ENCODE measurements at regions of chr5 and their contacts with region 1.

Region 1: DNA sequence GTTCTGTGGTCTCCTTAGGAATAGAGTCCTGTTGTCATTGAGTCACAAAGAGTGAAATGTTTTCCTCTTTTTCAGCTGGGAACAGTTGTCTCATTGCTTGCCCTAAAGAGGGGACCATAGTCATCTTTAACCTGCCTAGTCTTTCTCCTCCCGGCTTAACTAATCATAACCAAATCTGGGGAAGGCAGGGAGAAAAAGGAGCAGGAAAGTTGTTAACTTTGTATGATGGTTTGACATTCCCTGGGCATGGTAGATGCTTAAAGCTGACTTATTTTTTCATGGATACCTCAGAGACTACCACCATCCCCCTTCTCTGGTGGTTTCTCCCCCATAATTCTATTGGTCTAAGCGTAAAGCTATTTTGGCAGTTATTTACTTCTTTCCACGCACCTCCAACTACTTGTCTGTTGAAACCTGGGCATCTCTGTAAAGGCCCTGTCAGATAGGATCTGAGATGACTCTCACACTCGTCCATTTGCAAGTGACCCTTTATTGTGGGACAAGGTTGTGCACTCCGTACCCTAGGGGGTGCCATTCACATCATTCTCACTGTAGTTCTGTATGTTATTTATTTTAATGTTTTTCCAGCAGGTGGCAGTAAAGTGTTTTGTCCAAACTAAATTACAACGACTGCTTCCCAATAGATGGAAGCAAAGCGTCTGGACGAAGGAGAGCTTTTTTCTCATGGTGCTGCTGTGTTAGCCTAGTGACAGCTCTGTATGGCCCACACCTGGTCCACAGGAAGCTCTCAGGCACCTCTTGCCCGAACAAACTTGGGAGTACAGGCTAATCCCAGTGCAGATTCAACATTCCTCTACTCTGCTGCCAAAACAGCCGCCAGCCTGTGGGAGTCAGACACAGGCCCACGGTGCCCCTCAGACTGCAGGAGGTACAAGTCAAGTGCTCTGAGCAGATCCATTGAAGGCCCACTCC is 3.0 kb upstream of the FAM13B start:
- DNase-seq: peak; percentile 11 to 80 (median 72)
- ATAC-seq: peak; percentile 76
- H3K4me3 ChIP-seq: no peak overlapping the region
- H3K4me3 Mint-ChIP-seq: peak overlapping the region in 9 of 10 donors; percentile 0 to 78 (median 25)
- H3K27ac ChIP-seq: no peak overlapping the region
- H3K27ac Mint-ChIP-seq: peak overlapping the region in 8 of 9 donors; percentile 4 to 89 (median 37)
- H3K4me1 ChIP-seq: peaks cover 4 to 24% of the 10 kb centered on the region in 2 donors
- H3K4me1 Mint-ChIP-seq: peaks cover 15 to 30% (median 24%) of the 10 kb centered on the region in 7 donors
- H3K27me3 ChIP-seq: no peaks in the 10 kb centered on the region
- H3K27me3 Mint-ChIP-seq: no peaks in the 10 kb centered on the region

Region 2: DNA sequence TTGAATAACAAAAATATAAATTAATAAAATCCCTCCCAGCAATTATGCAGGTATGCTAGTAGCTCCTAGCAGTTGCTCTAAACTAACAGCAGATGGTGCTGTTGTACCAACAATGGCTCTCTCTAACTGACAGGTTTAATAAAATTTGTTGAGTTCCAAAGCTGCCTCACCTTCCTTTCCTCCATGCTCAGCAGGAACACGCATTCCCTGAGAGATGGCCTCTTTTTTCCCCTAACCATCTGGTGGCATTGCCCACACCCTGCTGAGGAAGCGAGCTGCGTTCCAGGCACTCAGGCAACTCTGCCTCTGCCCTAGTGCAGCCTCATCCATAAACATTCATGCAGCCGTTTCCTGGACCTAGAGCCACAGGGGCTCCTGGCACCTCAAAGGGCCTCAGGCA is 406.2 kb before region 1 on chr5:
- CTCF ChIA-PET with region 1: no interaction called
- POLR2A ChIA-PET with region 1: interaction called, 3 read pairs
- intact Hi-C with region 1: loop called in 1 of 2 experiments (anchors 1 kb)
- DNase-seq: peak in 7 of 9 donors; percentile 26 to 61 (median 52)
- ATAC-seq: peak; percentile 82
- H3K4me3 ChIP-seq: no peak overlapping the region
- H3K4me3 Mint-ChIP-seq: no peak overlapping the region
- H3K27ac ChIP-seq: no peak overlapping the region
- H3K27ac Mint-ChIP-seq: no peak overlapping the region
- H3K4me1 ChIP-seq: no peaks in the 10 kb centered on the region
- H3K4me1 Mint-ChIP-seq: peaks cover 0 to 2% (median 0%) of the 10 kb centered on the region in 7 donors
- H3K27me3 ChIP-seq: no peaks in the 10 kb centered on the region
- H3K27me3 Mint-ChIP-seq: no peaks in the 10 kb centered on the region

Region 3: DNA sequence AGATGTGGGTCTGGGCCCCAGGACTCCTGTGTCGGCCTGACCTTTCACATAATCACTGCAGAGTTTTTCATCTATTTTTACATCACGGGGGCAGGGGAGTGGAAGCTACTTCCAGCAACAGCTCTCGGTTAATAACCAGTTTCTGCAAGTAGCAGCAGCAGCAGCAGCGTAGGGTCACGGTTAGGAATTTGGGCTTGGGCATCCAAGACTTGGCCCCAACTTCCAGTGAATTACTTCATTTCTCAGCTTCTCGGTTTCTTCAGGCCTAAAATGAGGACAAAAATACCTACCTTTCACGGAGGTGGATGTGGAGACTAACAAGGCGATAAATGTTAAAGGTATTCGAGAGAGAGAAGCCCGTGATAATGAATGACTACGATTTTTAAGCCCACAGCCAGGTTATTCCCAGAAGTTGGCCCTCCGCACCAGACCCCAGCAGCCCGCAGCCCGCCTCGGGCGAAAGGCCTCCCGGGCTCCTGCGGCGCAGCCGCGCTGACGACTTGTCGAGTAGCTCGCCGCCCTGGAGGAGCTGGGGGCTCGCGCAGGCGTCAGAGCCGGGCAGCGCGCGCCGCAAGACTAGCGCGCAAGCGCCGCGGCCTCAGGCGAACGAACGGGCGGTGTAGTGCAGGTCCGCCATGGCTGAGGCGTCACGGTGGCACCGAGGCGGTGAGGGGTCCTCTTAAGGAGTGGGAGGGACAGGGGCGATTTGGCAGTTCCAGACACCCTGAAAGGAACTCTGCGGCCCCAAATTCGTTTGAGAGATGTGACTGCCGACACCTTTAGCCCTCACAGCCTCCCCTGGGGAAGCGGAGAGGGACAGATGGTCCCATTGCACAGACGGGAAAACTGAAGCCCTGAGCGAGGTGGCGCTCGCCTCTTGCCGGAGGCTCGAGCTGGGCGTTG is 146.8 kb before region 1 on chr5 and contains the start of gene PKD2L2:
- CTCF ChIA-PET with region 1: no interaction called
- POLR2A ChIA-PET with region 1: no interaction called
- intact Hi-C with region 1: loop called in 1 of 2 experiments (anchors 1 kb)
- DNase-seq: peak; percentile 62 to 82 (median 78)
- ATAC-seq: peak; percentile 99
- H3K4me3 ChIP-seq: peak within 1 kb of the TSS; percentile 73
- H3K4me3 Mint-ChIP-seq: peak within 1 kb of the TSS; percentile 85 to 95 (median 92)
- H3K27ac ChIP-seq: peak within 1 kb of the TSS; percentile 81
- H3K27ac Mint-ChIP-seq: peak within 1 kb of the TSS; percentile 87 to 96 (median 95)
- H3K4me1 ChIP-seq: peaks cover 4 to 12% of the 10 kb centered on the region in 2 donors
- H3K4me1 Mint-ChIP-seq: peaks cover 9 to 37% (median 25%) of the 10 kb centered on the region in 7 donors
- H3K27me3 ChIP-seq: no peaks in the 10 kb centered on the region
- H3K27me3 Mint-ChIP-seq: peaks cover 0 to 4% (median 0%) of the 10 kb centered on the region in 5 donors
- total RNA-seq, gene PKD2L2: 0.46 TPM in 2 of 5 experiments, not detected in the others

Region 4: DNA sequence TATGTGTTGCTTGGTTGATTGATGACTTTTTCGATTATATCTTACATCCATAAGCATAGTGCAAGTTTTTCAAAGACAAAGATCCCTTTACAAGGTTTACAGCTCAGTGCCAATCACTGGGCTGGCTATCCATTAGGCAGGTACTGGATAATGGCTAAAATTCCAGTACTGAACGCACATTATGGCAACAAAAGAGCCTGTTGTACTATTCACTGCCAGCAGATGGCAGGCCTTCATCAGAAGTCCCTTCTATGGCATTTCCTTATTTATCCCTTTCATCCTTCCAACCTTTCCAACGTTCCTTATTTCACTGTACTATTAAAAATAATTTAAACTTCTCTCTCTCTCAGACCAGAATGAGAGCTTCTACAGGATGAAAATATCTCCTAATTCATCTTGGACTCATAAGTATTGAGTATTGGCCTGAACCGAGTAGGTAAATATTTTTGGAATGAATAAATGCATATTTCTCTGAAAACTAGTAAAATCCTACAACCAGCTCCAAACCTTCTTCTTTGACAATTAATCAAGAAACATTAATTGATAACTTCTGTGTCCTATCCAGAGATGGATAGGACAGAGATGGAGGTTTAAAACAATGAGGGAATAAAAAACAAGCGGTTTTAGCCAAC is 41.3 kb after region 1 on chr5:
- CTCF ChIA-PET with region 1: interaction called, 6 read pairs
- POLR2A ChIA-PET with region 1: no interaction called
- intact Hi-C with region 1: loop called (anchors 2 kb)
- DNase-seq: peak in 8 of 9 donors; percentile 23 to 55 (median 39)
- ATAC-seq: peak; percentile 66
- H3K4me3 ChIP-seq: no peak overlapping the region
- H3K4me3 Mint-ChIP-seq: no peak overlapping the region
- H3K27ac ChIP-seq: no peak overlapping the region
- H3K27ac Mint-ChIP-seq: no peak overlapping the region
- H3K4me1 ChIP-seq: no peaks in the 10 kb centered on the region
- H3K4me1 Mint-ChIP-seq: peaks cover 0 to 17% (median 10%) of the 10 kb centered on the region in 7 donors
- H3K27me3 ChIP-seq: no peaks in the 10 kb centered on the region
- H3K27me3 Mint-ChIP-seq: peaks cover 0 to 4% (median 0%) of the 10 kb centered on the region in 5 donors

Region 5: GRCh38 chr5:138148811-138149210 is 112.9 kb after region 1 on chr5:
- CTCF ChIA-PET with region 1: no interaction called
- POLR2A ChIA-PET with region 1: no interaction called
- intact Hi-C with region 1: no loop called
- DNase-seq: no peak
- ATAC-seq: no peak
- H3K4me3 ChIP-seq: no peak overlapping the region
- H3K4me3 Mint-ChIP-seq: no peak overlapping the region
- H3K27ac ChIP-seq: no peak overlapping the region
- H3K27ac Mint-ChIP-seq: no peak overlapping the region
- H3K4me1 ChIP-seq: no peaks in the 10 kb centered on the region
- H3K4me1 Mint-ChIP-seq: no peaks in the 10 kb centered on the region
- H3K27me3 ChIP-seq: no peaks in the 10 kb centered on the region
- H3K27me3 Mint-ChIP-seq: peaks cover 0 to 9% (median 0%) of the 10 kb centered on the region in 5 donors

Region 6: DNA sequence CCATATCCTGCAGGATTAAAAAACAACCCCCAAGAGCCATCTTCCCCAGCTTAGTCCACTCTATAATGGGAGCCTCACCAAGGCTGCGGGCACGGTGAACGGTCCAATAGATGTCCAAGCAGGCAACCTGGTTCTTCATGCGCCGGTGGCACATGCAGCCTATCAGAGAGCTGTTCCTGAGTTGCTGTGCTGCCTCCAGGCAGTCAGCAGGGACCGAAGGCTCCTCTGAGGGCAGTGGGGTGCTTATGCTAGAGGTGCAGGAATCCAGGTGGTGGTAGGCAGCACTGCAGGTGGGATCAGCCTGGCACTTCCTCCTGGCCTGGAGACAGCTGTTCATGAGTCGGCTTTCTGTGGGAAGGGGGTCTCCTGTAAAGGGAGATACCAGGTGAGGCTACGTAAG is 228.3 kb after region 1 on chr5:
- CTCF ChIA-PET with region 1: no interaction called
- POLR2A ChIA-PET with region 1: no interaction called
- intact Hi-C with region 1: no loop called
- DNase-seq: no peak
- ATAC-seq: no peak
- H3K4me3 ChIP-seq: no peak overlapping the region
- H3K4me3 Mint-ChIP-seq: no peak overlapping the region
- H3K27ac ChIP-seq: no peak overlapping the region
- H3K27ac Mint-ChIP-seq: peak overlapping the region in 1 of 9 donors; percentile 7
- H3K4me1 ChIP-seq: no peaks in the 10 kb centered on the region
- H3K4me1 Mint-ChIP-seq: peaks cover 0 to 2% (median 0%) of the 10 kb centered on the region in 7 donors
- H3K27me3 ChIP-seq: no peaks in the 10 kb centered on the region
- H3K27me3 Mint-ChIP-seq: peaks cover 0 to 22% (median 10%) of the 10 kb centered on the region in 5 donors

Region 7: DNA sequence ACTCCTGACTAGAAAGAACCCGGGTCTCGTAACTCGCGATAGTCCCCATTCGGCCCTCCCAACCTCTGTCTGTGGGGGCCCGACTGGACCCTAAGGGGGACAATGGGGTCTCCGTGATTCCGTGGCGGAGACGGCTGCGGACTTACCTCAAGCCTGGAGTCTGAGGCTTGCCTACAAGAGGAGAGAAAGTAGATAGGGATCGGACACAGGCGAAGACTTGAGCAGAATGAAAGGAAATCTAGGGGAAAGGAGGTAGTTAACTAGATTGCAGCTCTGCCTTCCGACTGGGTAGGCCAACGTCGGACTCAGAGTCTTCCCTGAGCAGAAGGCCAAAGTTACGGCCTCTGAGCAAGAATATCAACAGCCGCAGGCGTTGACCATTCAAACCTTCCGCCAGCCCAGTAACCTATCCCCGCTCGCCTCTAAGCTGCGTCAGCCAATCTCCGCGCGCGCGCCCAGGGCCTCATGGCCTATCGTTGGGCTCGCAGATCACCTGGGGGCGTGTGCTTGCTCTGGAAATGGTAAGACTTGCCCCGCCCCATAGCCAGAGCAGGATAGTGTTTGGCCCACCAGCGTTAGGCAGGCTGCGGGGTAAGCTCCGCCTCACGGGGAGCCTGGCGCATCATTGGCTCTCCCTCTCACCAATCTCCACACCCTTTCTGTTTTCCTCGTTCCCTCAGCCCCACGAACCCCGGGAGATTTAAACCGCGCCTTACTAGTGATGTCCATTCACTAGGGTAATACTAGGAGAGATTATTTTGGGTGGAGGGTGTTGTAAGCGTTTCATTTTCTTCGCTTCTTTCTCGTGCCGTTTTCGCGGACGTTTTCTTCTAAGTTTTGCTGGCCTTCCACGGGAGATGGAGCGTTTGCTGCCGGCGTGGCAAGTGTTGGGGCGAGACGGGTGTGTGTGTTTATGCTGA is 295.8 kb after region 1 on chr5 and contains the start of gene CDC25C:
- CTCF ChIA-PET with region 1: no interaction called
- POLR2A ChIA-PET with region 1: no interaction called
- intact Hi-C with region 1: loop called (anchors 5 kb)
- DNase-seq: peak; percentile 87 to 98 (median 96)
- ATAC-seq: peak; percentile 100
- H3K4me3 ChIP-seq: peak within 1 kb of the TSS; percentile 85
- H3K4me3 Mint-ChIP-seq: peak within 1 kb of the TSS; percentile 83 to 95 (median 86)
- H3K27ac ChIP-seq: peak within 1 kb of the TSS; percentile 49
- H3K27ac Mint-ChIP-seq: peak within 1 kb of the TSS; percentile 48 to 92 (median 68)
- H3K4me1 ChIP-seq: peaks cover 1 to 7% of the 10 kb centered on the region in 2 donors
- H3K4me1 Mint-ChIP-seq: peaks cover 7 to 35% (median 14%) of the 10 kb centered on the region in 7 donors
- H3K27me3 ChIP-seq: no peaks in the 10 kb centered on the region
- H3K27me3 Mint-ChIP-seq: no peaks in the 10 kb centered on the region
- total RNA-seq, gene CDC25C: 9.8 TPM in 1 of 5 experiments, not detected in the others

Region 8: DNA sequence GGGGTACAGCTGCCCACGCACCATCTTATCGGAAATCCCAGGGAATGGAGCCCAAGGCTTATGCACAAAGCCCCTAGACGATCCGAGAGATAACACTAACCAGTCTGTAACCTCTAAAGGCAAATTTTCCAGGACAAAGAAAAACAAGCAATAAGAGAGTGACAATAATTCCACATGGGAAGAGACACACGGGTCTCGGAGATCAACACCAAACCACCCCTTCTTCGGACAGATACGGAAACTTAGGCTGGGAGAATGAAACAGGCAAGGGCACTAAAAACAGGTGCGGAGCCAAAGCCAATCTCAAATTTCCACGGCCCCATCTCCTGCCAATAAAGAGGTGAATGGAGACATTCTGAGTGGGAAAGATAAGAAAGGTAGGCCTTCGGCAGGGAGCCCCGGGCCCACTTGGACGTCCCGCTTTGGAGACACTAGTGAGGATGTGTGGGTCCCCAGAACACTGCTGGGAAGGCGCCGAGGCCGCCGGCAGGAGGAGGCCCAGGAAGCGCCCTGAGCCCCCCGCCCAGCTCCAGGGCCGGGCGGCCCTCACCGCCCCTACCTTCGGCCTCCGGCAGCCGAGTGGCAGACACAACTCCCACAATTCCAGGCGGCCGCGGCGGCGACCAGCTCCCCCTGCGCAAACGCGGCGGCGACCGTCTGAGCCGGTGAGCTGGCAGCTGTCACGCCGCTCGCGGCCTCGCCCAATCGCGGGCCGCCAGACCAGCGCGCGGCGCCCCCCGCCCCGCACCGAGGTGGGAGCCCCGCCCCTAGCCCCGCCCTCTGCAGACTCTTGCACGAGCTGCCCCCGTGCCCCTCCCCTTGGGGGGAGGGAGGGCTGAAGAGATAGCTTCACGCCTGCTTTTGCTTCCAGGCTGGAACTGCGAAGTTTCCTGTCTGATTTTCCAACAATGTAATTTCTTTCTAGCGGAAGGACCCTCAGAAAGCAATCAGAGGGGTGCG is 1162.1 kb after region 1 on chr5 and contains the start of gene SIL1:
- CTCF ChIA-PET with region 1: no interaction called
- POLR2A ChIA-PET with region 1: no interaction called
- intact Hi-C with region 1: loop called in 1 of 2 experiments (anchors 2 kb)
- DNase-seq: peak; percentile 88 to 94 (median 91)
- ATAC-seq: peak; percentile 99
- H3K4me3 ChIP-seq: peak within 1 kb of the TSS; percentile 97
- H3K4me3 Mint-ChIP-seq: peak within 1 kb of the TSS; percentile 83 to 96 (median 90)
- H3K27ac ChIP-seq: peak within 1 kb of the TSS; percentile 89
- H3K27ac Mint-ChIP-seq: peak within 1 kb of the TSS; percentile 86 to 96 (median 91)
- H3K4me1 ChIP-seq: peaks cover 8% of the 10 kb centered on the region in 2 donors
- H3K4me1 Mint-ChIP-seq: peaks cover 17 to 38% (median 26%) of the 10 kb centered on the region in 7 donors
- H3K27me3 ChIP-seq: no peaks in the 10 kb centered on the region
- H3K27me3 Mint-ChIP-seq: no peaks in the 10 kb centered on the region
- total RNA-seq, gene SIL1: 11.9 to 27.1 (median 22.8) TPM